ENCODE measurements at regions of chr4 and their contacts with region 1.

Region 1: DNA sequence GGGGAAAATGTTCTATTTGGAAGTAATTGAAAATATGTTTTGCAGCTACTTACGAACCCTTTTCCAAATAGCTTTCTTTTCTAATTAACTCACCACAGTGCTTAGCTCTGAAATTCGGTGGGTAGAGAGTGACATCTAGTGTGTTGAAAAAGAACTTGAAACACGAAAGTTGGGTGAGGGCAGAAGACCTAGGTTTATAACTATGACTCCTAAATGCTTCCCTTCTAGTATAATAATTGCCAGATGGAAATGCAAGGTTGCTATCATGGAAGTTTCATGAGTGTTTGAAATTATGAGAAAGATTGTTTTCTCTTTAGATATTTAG is 77.3 kb upstream of the NOCT start:
- DNase-seq: peak; percentile 27
- ATAC-seq: peak; percentile 86
- H3K4me3 ChIP-seq: no peak overlapping the region
- H3K27ac ChIP-seq: no peak overlapping the region
- H3K4me1 ChIP-seq: peaks cover 27% of the 10 kb centered on the region
- H3K27me3 ChIP-seq: peaks cover 0 to 1% of the 10 kb centered on the region in 2 experiments; a peak in 1 of 5 replicates
- CTCF ChIP-seq: peak; percentile 73
- EP300 ChIP-seq: no peak
- POLR2A ChIP-seq: no peak
- RAD21 ChIP-seq: peak; percentile 46; the same call in 1 of the 2 replicates

Region 2: DNA sequence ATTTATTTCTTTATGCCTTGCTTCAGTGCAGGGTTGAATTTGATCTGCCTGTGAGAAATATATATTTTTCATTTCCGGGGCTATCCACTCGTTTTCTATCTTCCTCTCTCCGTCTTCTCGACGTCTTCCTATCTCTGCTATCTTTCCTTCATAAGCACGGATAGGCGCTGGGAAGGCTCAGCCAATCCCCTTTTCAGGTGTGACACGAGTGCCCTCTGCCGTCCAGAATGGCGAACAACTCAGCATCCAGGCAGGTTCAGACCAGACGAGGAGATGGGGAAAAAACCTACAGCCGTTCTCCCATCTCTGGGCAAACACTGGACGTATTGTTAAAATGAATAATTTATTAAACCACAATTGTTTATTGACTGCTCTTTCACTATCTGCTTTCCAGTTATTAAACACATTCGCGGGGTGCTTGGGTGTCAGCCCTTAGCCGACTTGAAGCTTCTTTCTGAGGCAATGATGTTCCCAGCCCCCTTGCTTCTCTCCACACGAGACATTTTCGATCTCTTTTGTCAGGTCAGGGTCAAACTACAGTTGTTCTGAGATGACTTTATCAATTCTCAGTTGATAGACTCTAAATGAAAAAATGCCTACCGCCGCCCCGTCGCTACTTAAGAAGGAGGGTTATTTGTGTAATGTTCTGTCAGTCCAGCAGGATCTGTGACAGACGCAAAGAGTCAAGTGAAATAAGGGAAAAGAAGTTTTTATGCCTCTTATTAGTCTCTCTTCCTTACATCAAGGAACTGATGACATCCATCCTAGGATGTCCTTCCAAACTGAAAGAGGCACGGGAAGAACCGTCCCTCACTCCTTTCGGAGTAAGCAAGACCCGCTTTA is 19.0 kb before region 1 on chr4:
- CTCF ChIA-PET with region 1: no interaction called
- POLR2A ChIA-PET with region 1: no interaction called
- in situ Hi-C with region 1: no loop called
- intact Hi-C with region 1: loop called (anchors 2 kb)
- DNase-seq: peak; percentile 49
- ATAC-seq: peak; percentile 99
- H3K4me3 ChIP-seq: no peak overlapping the region
- H3K27ac ChIP-seq: no peak overlapping the region
- H3K4me1 ChIP-seq: no peaks in the 10 kb centered on the region
- H3K27me3 ChIP-seq: no peaks in the 10 kb centered on the region
- CTCF ChIP-seq: peak; percentile 87
- EP300 ChIP-seq: no peak
- POLR2A ChIP-seq: no peak
- RAD21 ChIP-seq: peak; percentile 63

Region 3: GRCh38 chr4:139015269-139015947 is 77.1 kb after region 1 on chr4 and contains the start of gene NOCT:
- CTCF ChIA-PET with region 1: no interaction called
- POLR2A ChIA-PET with region 1: no interaction called
- in situ Hi-C with region 1: no loop called
- intact Hi-C with region 1: loop called (anchors 2 kb)
- DNase-seq: peak; percentile 80
- ATAC-seq: peak; percentile 95
- H3K4me3 ChIP-seq: peak within 1 kb of the TSS; percentile 79 to 90 (median 81)
- H3K27ac ChIP-seq: peak within 1 kb of the TSS; percentile 85
- H3K4me1 ChIP-seq: peaks cover 59% of the 10 kb centered on the region
- H3K27me3 ChIP-seq: no peaks in the 10 kb centered on the region; a peak in 1 of 5 replicates
- CTCF ChIP-seq: no peak
- EP300 ChIP-seq: 0 out of 4 replicates have a peak, but pooled peaks of 1 of the 2 experiments have one; percentile 15
- POLR2A ChIP-seq: peak; percentile 96 to 97
- RAD21 ChIP-seq: 0 out of 2 replicates have a peak, but pooled peaks have one; percentile 28
- total RNA-seq, gene NOCT: 11.0 and 13.1 TPM in 2 replicates